ENCODE measurements at regions of chr2 and their contacts with region 1.

Region 1: GRCh38 chr2:65056215-65057053 is at the start of gene CEP68:
- DNase-seq: peak; percentile 99
- H3K4me3 ChIP-seq: peak within 1 kb of the TSS; percentile 90
- H3K27ac ChIP-seq: peak within 1 kb of the TSS; percentile 40
- H3K4me1 ChIP-seq: peaks cover 7% of the 10 kb centered on the region; the same call in 1 of the 2 replicates
- H3K27me3 ChIP-seq: no peaks in the 10 kb centered on the region
- total RNA-seq, gene CEP68: 5.1 and 7.3 TPM in 2 replicates

Region 2: DNA sequence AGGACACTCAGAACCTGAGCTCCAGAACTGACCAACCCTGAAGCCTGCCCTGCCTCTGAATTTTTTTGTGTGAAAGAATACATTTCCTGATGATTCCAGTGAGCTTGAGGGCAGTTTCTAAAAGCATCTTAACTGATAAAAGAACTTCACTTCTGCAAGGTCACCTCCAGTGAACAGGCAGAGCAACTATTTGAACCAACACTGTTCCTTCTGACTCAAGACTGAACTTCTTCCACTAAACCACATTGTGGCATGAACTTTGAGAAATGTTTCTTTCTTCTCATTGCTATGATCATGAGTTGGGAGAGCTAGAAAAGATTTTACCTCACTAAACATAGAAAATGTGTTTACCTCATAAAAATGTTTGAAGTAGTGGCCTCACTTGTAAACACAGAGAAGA is 318.9 kb before region 1 on chr2:
- in situ Hi-C with region 1: no loop called
- DNase-seq: peak; percentile 52
- H3K4me3 ChIP-seq: no peak overlapping the region
- H3K27ac ChIP-seq: peak overlapping the region; percentile 30
- H3K4me1 ChIP-seq: peaks cover 11% of the 10 kb centered on the region
- H3K27me3 ChIP-seq: no peaks in the 10 kb centered on the region

Region 3: DNA sequence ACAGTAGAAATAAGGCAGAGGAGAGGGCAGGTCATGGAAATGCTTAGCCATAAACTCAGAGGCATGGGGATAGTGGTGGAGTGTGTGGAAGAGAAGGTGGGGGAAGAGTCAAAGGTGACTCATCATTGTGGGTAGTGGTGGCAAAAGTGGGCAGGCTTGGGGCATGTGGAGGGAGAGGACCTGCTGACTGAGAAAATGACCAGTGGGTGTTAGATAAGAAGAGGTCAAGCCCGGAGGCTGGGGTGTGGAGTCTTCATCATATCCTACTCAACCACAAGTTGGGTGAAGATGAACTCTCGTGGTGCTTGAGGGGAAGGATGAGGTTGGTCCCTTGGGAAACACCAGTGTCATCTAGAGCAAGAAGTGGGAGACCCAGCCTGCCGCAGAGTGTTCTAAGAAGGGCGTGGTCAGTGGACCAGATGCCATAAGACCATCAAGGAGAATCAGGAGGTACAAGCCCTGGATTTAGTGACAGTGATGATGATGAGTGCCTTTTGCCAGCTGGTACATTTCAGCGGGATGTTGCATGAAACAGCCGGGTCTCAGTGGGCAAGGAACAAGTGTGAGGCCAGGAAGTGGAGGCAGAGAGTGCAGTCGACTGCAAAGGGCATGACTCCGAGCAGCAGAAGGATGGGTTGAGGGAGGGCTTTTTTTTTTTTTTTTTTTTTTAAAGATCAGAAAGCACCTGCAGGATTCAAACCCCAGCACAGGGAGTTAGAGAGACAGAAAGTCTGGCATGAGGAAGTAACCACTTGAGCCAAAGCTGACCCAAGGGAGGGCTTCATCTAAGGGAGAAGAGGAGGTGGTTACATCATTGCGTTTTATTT is 498.5 kb after region 1 on chr2:
- in situ Hi-C with region 1: loop called (anchors 25 kb)
- DNase-seq: peak; percentile 62
- H3K4me3 ChIP-seq: no peak overlapping the region
- H3K27ac ChIP-seq: no peak overlapping the region
- H3K4me1 ChIP-seq: peaks cover 16% of the 10 kb centered on the region
- H3K27me3 ChIP-seq: no peaks in the 10 kb centered on the region

Region 4: GRCh38 chr2:66173645-66174044 is 1117.2 kb after region 1 on chr2:
- in situ Hi-C with region 1: no loop called
- DNase-seq: no peak
- H3K4me3 ChIP-seq: no peak overlapping the region
- H3K27ac ChIP-seq: no peak overlapping the region
- H3K4me1 ChIP-seq: no peaks in the 10 kb centered on the region
- H3K27me3 ChIP-seq: no peaks in the 10 kb centered on the region